Activated CD8-positive, alpha-beta T cell treated with anti-CD3 and anti-CD28 coated beads for 36 hours (primary cell): ENCODE measurements at regions of chr5 and their contacts with region 1.

Region 1: GRCh38 chr5:42423285-42424165 is at the start of gene GHR:
- DNase-seq: peak; percentile 29
- ATAC-seq: peak; percentile 67
- H3K4me3 Mint-ChIP-seq: no peak within 1 kb of the TSS
- H3K27ac Mint-ChIP-seq: no peak within 1 kb of the TSS
- H3K4me1 Mint-ChIP-seq: no peaks in the 10 kb centered on the region
- H3K27me3 Mint-ChIP-seq: peaks cover 11% of the 10 kb centered on the region
- CTCF ChIP-seq: peak; percentile 66
- total RNA-seq, gene GHR: not detected

Region 2: GRCh38 chr5:42377496-42377895 is 46.0 kb before region 1 on chr5:
- CTCF ChIA-PET with region 1: no interaction called
- POLR2A ChIA-PET with region 1: no interaction called
- intact Hi-C with region 1: no loop called
- DNase-seq: no peak
- ATAC-seq: no peak
- H3K4me3 Mint-ChIP-seq: no peak overlapping the region
- H3K27ac Mint-ChIP-seq: no peak overlapping the region
- H3K4me1 Mint-ChIP-seq: no peaks in the 10 kb centered on the region
- H3K27me3 Mint-ChIP-seq: no peaks in the 10 kb centered on the region
- CTCF ChIP-seq: no peak

Region 3: GRCh38 chr5:42767491-42768105 is 344.1 kb after region 1 on chr5:
- CTCF ChIA-PET with region 1: no interaction called
- POLR2A ChIA-PET with region 1: no interaction called
- intact Hi-C with region 1: loop called (anchors 10 kb)
- DNase-seq: no peak
- ATAC-seq: no peak
- H3K4me3 Mint-ChIP-seq: no peak overlapping the region
- H3K27ac Mint-ChIP-seq: no peak overlapping the region
- H3K4me1 Mint-ChIP-seq: no peaks in the 10 kb centered on the region
- H3K27me3 Mint-ChIP-seq: peaks cover 1% of the 10 kb centered on the region
- CTCF ChIP-seq: peak; percentile 66